Calu3 (cell line): ENCODE measurements at regions of chr2 and their contacts with region 1.

Region 1: DNA sequence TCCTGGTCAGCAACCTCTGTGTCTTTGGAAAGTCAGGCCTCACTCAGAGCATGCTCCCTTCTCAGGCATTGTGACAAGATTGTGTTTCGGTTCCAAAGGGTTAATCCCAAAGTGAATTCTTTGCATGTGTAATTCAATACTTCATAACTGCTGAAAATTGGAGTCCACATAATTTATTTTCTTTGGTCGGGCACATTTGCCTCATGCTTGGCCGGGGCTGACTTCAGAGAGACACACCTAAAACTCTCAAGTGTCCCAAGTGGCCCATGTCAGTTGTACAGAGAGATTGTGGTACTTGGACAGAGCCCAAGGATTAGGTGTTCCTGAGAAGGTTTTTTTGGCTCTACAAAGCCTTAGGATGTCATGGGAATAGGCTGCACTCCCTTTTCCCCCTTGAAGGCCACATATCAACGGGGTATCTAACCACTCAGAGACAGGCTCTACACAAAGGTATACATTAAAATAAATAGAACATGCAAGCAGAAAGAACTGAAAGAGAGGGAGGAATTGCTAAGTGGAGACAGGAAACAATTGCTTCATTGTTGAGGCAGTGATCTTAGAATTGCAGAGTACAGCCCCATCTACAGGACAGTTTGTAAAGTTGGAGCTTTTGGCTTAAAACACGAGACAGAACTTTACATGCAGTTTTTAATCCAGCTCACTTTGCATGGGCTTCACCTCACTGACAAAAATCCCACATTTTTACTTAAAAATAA is 1232.3 kb upstream of the ZEB2 start:
- DNase-seq: peak; percentile 60
- H3K4me3 Mint-ChIP-seq: peak overlapping the region; percentile 42
- H3K27ac Mint-ChIP-seq: peak overlapping the region; percentile 91
- H3K4me1 Mint-ChIP-seq: peaks cover 56% of the 10 kb centered on the region
- H3K27me3 Mint-ChIP-seq: no peaks in the 10 kb centered on the region
- CTCF ChIP-seq: peak; percentile 63

Region 2: DNA sequence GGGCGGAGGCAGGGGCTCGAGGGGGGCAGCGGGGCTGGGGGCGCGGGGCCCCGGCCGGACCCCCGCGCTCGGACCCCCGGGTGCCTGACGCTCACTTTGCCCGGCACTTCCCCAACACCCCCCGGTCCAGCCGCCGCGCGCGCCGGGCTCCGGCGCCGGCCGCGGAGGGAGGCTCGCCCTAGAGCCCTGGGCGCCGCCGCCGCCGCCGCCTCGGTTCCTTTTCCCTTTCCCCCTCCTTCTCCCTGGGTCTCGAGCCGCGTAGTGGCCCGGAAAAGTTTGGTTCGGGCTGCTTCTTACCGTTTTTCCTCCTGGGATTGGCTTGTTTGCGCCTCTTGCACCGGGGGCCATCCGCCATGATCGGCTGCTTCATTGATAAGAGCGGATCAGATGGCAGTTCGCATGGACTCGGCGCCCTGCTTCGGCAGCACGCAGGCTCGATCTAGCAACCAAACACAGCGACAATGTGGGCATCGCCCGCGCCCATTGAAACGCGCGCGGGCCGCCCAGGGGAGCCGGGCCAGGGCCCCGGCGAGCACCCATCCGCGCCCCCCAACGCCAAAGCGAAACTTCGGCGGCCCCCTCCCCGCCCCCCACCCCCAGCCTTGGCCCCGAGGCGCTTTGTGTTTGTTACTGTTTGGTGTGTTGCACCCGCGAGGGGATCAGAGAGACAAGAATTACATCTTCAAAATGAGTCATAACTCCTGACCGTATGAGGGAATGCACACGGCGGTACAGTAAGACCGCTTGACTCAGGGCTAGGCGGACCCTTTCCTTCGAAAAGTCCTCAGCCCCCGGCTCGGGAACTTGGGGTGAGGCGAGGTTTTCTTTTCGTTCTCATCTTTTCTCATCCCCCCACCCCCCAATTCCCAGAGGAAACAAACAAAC is 1235.0 kb before region 1 on chr2:
- CTCF ChIA-PET with region 1: no interaction called
- intact Hi-C with region 1: loop called (anchors 10 kb)
- DNase-seq: peak; percentile 26
- H3K4me3 Mint-ChIP-seq: no peak overlapping the region
- H3K27ac Mint-ChIP-seq: no peak overlapping the region
- H3K4me1 Mint-ChIP-seq: peaks cover under 1% of the 10 kb centered on the region
- H3K27me3 Mint-ChIP-seq: no peaks in the 10 kb centered on the region
- CTCF ChIP-seq: no peak

Region 3: GRCh38 chr2:145258903-145259579 is 493.2 kb before region 1 on chr2:
- CTCF ChIA-PET with region 1: no interaction called
- intact Hi-C with region 1: loop called (anchors 10 kb)
- DNase-seq: no peak
- H3K4me3 Mint-ChIP-seq: no peak overlapping the region
- H3K27ac Mint-ChIP-seq: no peak overlapping the region
- H3K4me1 Mint-ChIP-seq: peaks cover 11% of the 10 kb centered on the region
- H3K27me3 Mint-ChIP-seq: no peaks in the 10 kb centered on the region
- CTCF ChIP-seq: no peak

Region 4: GRCh38 chr2:145623136-145623535 is 129.1 kb before region 1 on chr2:
- CTCF ChIA-PET with region 1: no interaction called
- intact Hi-C with region 1: loop called (anchors 10 kb)
- DNase-seq: peak; percentile 8
- H3K4me3 Mint-ChIP-seq: no peak overlapping the region
- H3K27ac Mint-ChIP-seq: peak overlapping the region; percentile 36
- H3K4me1 Mint-ChIP-seq: no peaks in the 10 kb centered on the region
- H3K27me3 Mint-ChIP-seq: no peaks in the 10 kb centered on the region
- CTCF ChIP-seq: no peak

Region 5: DNA sequence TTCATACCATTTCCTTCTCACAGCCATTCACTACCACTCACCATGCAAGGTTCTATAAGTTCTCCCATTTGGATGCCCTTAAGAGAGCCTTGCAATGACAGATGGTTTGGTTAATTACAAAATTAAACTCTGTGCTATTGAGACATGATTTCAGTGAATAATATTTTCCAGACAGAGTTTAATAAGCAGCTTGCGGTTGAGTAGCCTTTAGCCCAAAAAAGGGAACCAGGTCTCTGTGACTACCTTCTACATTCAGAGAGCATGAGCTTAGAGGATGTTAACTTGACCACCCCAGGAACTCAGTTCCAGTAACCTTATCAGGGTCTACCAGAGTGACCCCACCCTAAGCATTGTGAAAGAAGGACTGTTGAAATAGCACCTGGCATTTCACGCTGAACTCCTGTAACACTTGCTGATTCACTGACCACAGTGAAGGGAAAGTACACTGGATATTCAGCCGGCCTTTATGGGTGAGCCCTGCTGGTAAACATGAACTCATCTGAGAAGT is 59.2 kb before region 1 on chr2:
- CTCF ChIA-PET with region 1: interaction called, 5 read pairs
- intact Hi-C with region 1: loop called (anchors 2 kb)
- DNase-seq: peak; percentile 82
- H3K4me3 Mint-ChIP-seq: no peak overlapping the region
- H3K27ac Mint-ChIP-seq: peak overlapping the region; percentile 98
- H3K4me1 Mint-ChIP-seq: peaks cover 3% of the 10 kb centered on the region
- H3K27me3 Mint-ChIP-seq: no peaks in the 10 kb centered on the region
- CTCF ChIP-seq: no peak